ENCODE measurements at regions of chr1 and their contacts with region 1.

Region 1: GRCh38 chr1:114395863-114396262 is 115.1 kb downstream of the TRIM33 start:
- DNase-seq: no peak
- H3K4me3 ChIP-seq: no peak overlapping the region
- H3K27ac ChIP-seq: no peak overlapping the region
- H3K4me1 ChIP-seq: no peaks in the 10 kb centered on the region
- H3K27me3 ChIP-seq: no peaks in the 10 kb centered on the region
- CTCF ChIP-seq: no peak

Region 2: GRCh38 chr1:114685851-114686534 is 290.1 kb after region 1 on chr1:
- CTCF ChIA-PET with region 1: no interaction called
- POLR2A ChIA-PET with region 1: no interaction called
- intact Hi-C with region 1: no loop called
- DNase-seq: no peak
- H3K4me3 ChIP-seq: no peak overlapping the region
- H3K27ac ChIP-seq: no peak overlapping the region
- H3K4me1 ChIP-seq: no peaks in the 10 kb centered on the region
- H3K27me3 ChIP-seq: 0 out of 2 replicates have a peak, but pooled peaks cover 4% of the 10 kb centered on the region
- CTCF ChIP-seq: no peak

Region 3: GRCh38 chr1:114833421-114833820 is 437.6 kb after region 1 on chr1:
- CTCF ChIA-PET with region 1: no interaction called
- POLR2A ChIA-PET with region 1: interaction called, 12 read pairs
- intact Hi-C with region 1: no loop called
- DNase-seq: peak in 1 of 2 experiments; percentile 16
- H3K4me3 ChIP-seq: no peak overlapping the region
- H3K27ac ChIP-seq: no peak overlapping the region
- H3K4me1 ChIP-seq: 0 out of 2 replicates have a peak, but pooled peaks cover 1% of the 10 kb centered on the region
- H3K27me3 ChIP-seq: no peaks in the 10 kb centered on the region
- CTCF ChIP-seq: no peak

Measured in PC-9 (cell line).